H1 (cell line): ENCODE measurements at regions of chr17 and their contacts with region 1.

Region 1: DNA sequence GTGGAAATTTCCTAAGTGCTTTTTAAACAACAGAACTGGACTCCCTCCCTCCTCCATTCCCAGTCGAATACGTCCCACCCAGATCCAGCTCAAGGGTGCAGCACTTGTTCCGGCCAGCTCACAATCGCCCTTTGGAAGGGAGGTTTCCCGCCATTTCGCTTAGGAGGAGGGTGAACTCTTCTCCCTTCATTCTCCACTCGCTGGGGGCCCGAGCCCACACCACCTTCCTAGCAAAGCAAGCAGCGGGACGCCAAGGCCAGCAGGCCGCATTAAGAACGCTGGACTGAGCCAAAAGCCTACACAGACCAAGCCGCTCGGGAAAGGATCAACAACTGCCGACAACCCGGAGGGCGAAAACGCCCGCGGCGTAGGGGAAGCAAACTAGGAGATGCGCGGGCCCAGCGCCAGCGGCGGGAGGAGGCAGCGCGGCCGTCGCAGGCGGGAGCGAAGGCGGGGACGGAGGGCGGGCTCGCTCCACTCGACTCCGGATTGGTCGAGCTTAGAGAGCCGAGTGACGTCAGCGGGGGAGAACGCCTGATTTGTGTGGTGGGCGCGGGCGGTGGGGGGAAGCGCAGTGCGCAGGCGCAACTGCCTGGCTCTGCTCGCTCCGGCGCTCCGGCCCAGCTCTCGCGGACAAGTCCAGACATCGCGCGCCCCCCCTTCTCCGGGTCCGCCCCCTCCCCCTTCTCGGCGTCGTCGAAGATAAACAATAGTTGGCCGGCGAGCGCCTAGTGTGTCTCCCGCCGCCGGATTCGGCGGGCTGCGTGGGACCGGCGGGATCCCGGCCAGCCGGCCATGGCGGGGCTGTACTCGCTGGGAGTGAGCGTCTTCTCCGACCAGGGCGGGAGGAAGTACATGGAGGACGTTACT is at the start of gene PPM1D:
- DNase-seq: peak; percentile 94 to 99
- H3K4me3 ChIP-seq: peak within 1 kb of the TSS; percentile 68 to 96 (median 93)
- H3K27ac ChIP-seq: peak within 1 kb of the TSS; percentile 97
- H3K4me1 ChIP-seq: peaks cover 0 to 3% (median 0%) of the 10 kb centered on the region in 4 experiments; a peak in 1 of 7 replicates
- H3K27me3 ChIP-seq: no peaks in the 10 kb centered on the region
- CTCF ChIP-seq: 0 out of 4 replicates have a peak, but pooled peaks of 1 of the 3 experiments have one; percentile 1
- EP300 ChIP-seq: no peak
- POLR2A ChIP-seq: peak; percentile 87 to 99
- RAD21 ChIP-seq: no peak
- total RNA-seq, gene PPM1D: 15.7 and 16.7 TPM in 2 replicates

Region 2: GRCh38 chr17:60525685-60526514 is 74.0 kb before region 1 on chr17 and contains the start of gene APPBP2:
- CTCF ChIA-PET with region 1: interaction called, 4 read pairs
- POLR2A ChIA-PET with region 1: interaction called, 10 read pairs
- DNase-seq: peak; percentile 47 to 87
- H3K4me3 ChIP-seq: peak within 1 kb of the TSS; percentile 90 to 99 (median 97)
- H3K27ac ChIP-seq: peak within 1 kb of the TSS; percentile 95
- H3K4me1 ChIP-seq: peaks cover 0 to 4% (median 0%) of the 10 kb centered on the region in 4 experiments; a peak in 2 of 7 replicates
- H3K27me3 ChIP-seq: no peaks in the 10 kb centered on the region
- CTCF ChIP-seq: no peak
- EP300 ChIP-seq: no peak
- POLR2A ChIP-seq: peak; percentile 85 to 90
- RAD21 ChIP-seq: no peak
- total RNA-seq, gene APPBP2: 18.0 and 20.5 TPM in 2 replicates

Region 3: DNA sequence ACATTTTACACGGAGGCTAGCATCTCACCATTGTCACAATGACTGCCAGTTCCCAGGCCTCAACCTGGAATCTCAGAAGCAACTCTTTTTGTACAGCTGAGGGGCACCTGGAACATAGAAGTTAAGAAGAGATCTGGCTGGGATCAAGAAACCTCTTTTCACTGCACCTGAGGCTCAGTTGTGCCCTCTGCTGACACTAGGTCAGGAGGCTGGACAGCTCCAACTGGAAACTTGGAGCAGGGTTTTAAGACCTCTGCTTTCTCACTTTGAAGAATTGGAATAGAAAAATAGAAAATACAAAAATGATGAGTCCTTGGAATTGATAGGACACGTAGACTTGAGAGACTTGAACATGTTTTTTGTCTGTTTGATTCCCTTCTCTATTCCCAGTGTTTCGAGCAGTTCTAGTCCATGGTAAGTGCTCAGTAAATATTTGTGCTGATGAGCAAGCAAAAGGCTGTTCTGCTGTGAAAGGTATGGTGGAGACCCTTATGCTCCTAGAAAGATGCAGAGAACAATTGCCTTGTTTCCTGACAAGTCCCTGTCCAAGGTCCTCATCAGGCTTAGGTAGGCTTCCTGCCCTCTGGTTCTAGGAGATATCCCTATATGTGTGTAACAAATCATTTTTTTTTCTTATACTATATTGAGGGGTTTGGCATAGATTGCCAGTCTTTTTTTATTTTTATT is 13.4 kb before region 1 on chr17:
- CTCF ChIA-PET with region 1: interaction called, 13 read pairs
- POLR2A ChIA-PET with region 1: interaction called, 22 read pairs
- DNase-seq: no peak
- H3K4me3 ChIP-seq: no peak overlapping the region
- H3K27ac ChIP-seq: no peak overlapping the region
- H3K4me1 ChIP-seq: no peaks in the 10 kb centered on the region
- H3K27me3 ChIP-seq: no peaks in the 10 kb centered on the region
- CTCF ChIP-seq: peak; percentile 54 to 56 (median 56)
- EP300 ChIP-seq: no peak
- POLR2A ChIP-seq: no peak
- RAD21 ChIP-seq: peak; percentile 60 to 64

Region 4: DNA sequence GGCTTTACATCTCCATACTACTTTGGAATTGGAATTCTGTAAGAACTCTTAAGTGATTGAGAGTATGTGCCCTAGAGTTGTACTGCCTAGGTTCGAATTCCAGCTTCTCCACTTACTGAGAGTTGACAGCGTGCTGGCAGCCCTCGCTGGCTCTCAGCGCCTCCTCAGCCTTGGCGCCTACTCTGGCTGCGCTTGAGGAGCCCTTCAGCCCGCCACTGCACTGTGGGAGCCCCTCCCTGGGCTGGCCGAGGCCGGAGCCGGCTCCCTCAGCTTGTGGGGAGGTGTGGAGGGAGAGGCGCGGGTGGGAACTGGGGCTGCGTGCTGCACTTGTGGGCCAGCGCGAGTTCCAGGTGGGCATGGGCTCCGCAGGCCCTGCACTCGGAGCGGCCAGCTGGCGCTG is 13.5 kb after region 1 on chr17:
- CTCF ChIA-PET with region 1: interaction called, 12 read pairs
- POLR2A ChIA-PET with region 1: interaction called, 13 read pairs
- DNase-seq: no peak
- H3K4me3 ChIP-seq: no peak overlapping the region
- H3K27ac ChIP-seq: no peak overlapping the region
- H3K4me1 ChIP-seq: no peaks in the 10 kb centered on the region
- H3K27me3 ChIP-seq: no peaks in the 10 kb centered on the region
- CTCF ChIP-seq: no peak
- EP300 ChIP-seq: no peak
- POLR2A ChIP-seq: no peak
- RAD21 ChIP-seq: no peak